H1 (cell line): ENCODE measurements at regions of chr3 and their contacts with region 1.

Region 1: GRCh38 chr3:39196671-39197356 is 4.4 kb upstream of the XIRP1 start:
- DNase-seq: no peak
- H3K4me3 ChIP-seq: no peak overlapping the region
- H3K27ac ChIP-seq: no peak overlapping the region
- H3K4me1 ChIP-seq: no peaks in the 10 kb centered on the region; a peak in 1 of 7 replicates
- H3K27me3 ChIP-seq: no peaks in the 10 kb centered on the region
- CTCF ChIP-seq: no peak
- EP300 ChIP-seq: no peak
- POLR2A ChIP-seq: no peak
- RAD21 ChIP-seq: no peak

Region 2: GRCh38 chr3:39079530-39079929 is 117.3 kb before region 1 on chr3:
- CTCF ChIA-PET with region 1: no interaction called
- POLR2A ChIA-PET with region 1: no interaction called
- DNase-seq: no peak
- H3K4me3 ChIP-seq: no peak overlapping the region
- H3K27ac ChIP-seq: no peak overlapping the region
- H3K4me1 ChIP-seq: no peaks in the 10 kb centered on the region
- H3K27me3 ChIP-seq: no peaks in the 10 kb centered on the region
- CTCF ChIP-seq: no peak
- EP300 ChIP-seq: no peak
- POLR2A ChIP-seq: no peak
- RAD21 ChIP-seq: no peak

Region 3: GRCh38 chr3:39180546-39181346 is 16.1 kb before region 1 on chr3:
- CTCF ChIA-PET with region 1: interaction called, 187 read pairs
- POLR2A ChIA-PET with region 1: no interaction called
- DNase-seq: peak; percentile 62 to 94
- H3K4me3 ChIP-seq: peak overlapping the region; percentile 26 to 61 (median 52)
- H3K27ac ChIP-seq: no peak overlapping the region
- H3K4me1 ChIP-seq: peaks cover 4 to 20% (median 13%) of the 10 kb centered on the region in 4 experiments
- H3K27me3 ChIP-seq: peaks cover 0 to 12% (median 10%) of the 10 kb centered on the region in 4 experiments; a peak in 6 of 7 replicates
- CTCF ChIP-seq: no peak
- EP300 ChIP-seq: no peak
- POLR2A ChIP-seq: no peak
- RAD21 ChIP-seq: no peak; a peak in 1 of 4 replicates